Heart right ventricle (tissue), 16 donors: ENCODE measurements at regions of chr1 and their contacts with region 1.

Region 1: DNA sequence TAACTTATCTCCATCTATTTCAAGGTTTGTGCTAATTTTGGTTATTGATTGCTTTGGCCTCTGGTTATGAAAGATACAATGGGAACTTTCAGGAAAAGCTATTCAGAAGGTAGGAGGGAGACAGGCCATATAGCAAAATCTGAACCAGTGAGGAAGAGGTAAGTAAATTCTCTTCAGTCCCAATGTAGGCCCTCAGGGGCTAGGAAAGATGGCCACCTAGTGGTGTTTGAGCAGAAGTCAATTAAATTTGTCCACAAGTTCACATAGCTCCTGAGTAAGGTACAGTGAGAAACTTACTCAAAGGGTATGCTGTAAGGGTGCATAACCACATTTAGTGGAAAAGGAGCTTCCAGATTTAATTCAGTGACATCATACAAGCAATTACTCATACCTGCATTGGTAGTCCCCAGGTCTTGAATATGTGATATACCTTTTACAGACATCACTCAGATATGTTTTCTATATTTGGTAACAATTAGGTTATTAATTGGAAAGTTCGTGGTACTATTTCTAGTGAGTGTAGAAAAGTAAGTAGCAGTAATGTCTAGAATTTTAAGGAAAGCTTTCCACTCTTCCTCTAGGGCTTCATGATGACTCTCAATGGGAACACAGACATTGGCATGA is 21.4 kb upstream of the FMO1 start:
- DNase-seq: peak in 1 of 2 donors; percentile 46
- ATAC-seq: peak in 7 of 8 donors; percentile 68 to 87 (median 79)
- H3K4me3 ChIP-seq: no peak overlapping the region
- H3K27ac ChIP-seq: no peak overlapping the region
- H3K4me1 ChIP-seq: peaks cover 0 to 28% (median 11%) of the 10 kb centered on the region in 9 donors
- H3K27me3 ChIP-seq: no peaks in the 10 kb centered on the region
- CTCF ChIP-seq: peak; percentile 66 to 89 (median 84)

Region 2: GRCh38 chr1:170967042-170967910 is 259.6 kb before region 1 on chr1:
- intact Hi-C with region 1: loop called (anchors 1 to 10 kb)
- DNase-seq: peak in 1 of 2 donors; percentile 11
- ATAC-seq: peak in 2 of 8 donors; percentile 50 to 64
- H3K4me3 ChIP-seq: no peak overlapping the region
- H3K27ac ChIP-seq: no peak overlapping the region
- H3K4me1 ChIP-seq: peaks cover 0 to 4% (median 0%) of the 10 kb centered on the region in 9 donors
- H3K27me3 ChIP-seq: no peaks in the 10 kb centered on the region
- CTCF ChIP-seq: peak; percentile 49 to 79 (median 69)

Region 3: DNA sequence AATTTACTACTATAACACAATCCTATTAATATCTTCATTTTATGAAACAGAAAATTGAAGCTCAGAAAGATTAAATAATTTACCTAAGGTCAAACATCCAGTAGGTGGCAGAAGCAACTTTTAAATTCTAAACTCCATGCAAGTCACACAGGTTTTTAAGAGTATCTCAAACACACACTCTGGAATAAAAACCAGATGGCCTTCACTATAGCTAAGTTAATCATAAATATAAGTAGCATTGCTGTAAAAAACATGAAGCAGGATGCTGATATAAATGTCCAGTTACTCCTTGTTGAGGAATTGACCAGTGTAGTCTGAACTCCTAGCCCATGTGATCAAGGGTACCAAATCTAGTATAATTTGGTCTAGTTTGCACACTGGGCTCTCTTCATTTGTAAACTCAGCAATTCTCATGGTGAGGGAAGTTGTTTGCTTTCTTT is 145.5 kb before region 1 on chr1:
- intact Hi-C with region 1: loop called in 9 of 10 experiments (anchors 1 to 5 kb)
- DNase-seq: no peak
- ATAC-seq: peak in 7 of 8 donors; percentile 38 to 65 (median 56)
- H3K4me3 ChIP-seq: no peak overlapping the region
- H3K27ac ChIP-seq: peak overlapping the region in 8 of 10 donors; percentile 9 to 71 (median 48)
- H3K4me1 ChIP-seq: peaks cover 0 to 42% (median 10%) of the 10 kb centered on the region in 9 donors
- H3K27me3 ChIP-seq: no peaks in the 10 kb centered on the region
- CTCF ChIP-seq: peak; percentile 27 to 74 (median 59)

Region 4: GRCh38 chr1:171107262-171107940 is 119.5 kb before region 1 on chr1:
- intact Hi-C with region 1: loop called in 1 of 10 experiments (anchors 2 kb)
- DNase-seq: no peak
- ATAC-seq: peak in 4 of 8 donors; percentile 53 to 68 (median 62)
- H3K4me3 ChIP-seq: no peak overlapping the region
- H3K27ac ChIP-seq: peak overlapping the region in 4 of 10 donors; percentile 18 to 45 (median 32)
- H3K4me1 ChIP-seq: peaks cover 0 to 48% (median 5%) of the 10 kb centered on the region in 9 donors
- H3K27me3 ChIP-seq: no peaks in the 10 kb centered on the region
- CTCF ChIP-seq: peak in 5 of 9 donors; percentile 40 to 55 (median 44)

Region 5: DNA sequence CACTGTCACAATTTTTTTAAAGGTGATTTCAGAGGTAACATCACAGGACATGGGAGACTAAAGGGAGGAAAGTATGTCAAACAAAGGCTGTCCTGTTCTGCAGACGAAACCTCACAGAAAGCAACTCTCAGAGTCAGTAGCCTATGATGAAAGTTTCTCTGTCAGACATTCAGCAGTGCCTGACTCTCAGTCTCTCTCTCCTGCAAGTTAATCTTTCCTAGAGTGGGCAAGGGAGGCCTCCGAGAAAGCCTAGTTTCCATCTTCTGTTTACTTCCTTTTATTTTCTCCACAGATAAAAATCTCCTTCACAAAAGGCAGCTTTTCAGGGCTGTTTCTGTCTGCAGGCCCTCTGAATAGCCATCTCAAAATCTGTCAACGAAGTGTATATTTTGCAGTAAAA is 66.6 kb before region 1 on chr1:
- intact Hi-C with region 1: no loop called
- DNase-seq: no peak
- ATAC-seq: no peak
- H3K4me3 ChIP-seq: no peak overlapping the region
- H3K27ac ChIP-seq: peak overlapping the region in 5 of 10 donors; percentile 17 to 60 (median 45)
- H3K4me1 ChIP-seq: peaks cover 0 to 17% (median 12%) of the 10 kb centered on the region in 9 donors
- H3K27me3 ChIP-seq: no peaks in the 10 kb centered on the region
- CTCF ChIP-seq: no peak

Region 6: DNA sequence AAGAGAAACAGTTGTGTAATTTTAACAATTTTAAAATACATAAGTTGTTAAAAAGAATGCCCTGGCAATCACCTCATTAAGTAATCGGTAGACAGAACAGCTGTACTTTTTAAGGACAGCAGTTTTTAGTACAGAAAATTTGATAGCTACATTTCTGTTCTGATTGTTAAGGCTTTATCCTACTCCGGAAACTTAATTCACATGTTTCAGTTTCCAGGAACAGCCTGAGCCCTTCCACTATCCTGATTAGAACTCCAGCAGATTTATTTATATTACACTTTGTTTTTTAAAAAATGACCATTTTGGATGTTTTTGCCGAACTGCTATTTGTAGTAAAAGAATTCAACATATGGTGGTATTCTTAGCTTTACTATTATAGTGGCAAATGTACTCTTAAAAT is 267.2 kb after region 1 on chr1:
- intact Hi-C with region 1: no loop called
- DNase-seq: no peak
- ATAC-seq: peak in 2 of 8 donors; percentile 33 to 62
- H3K4me3 ChIP-seq: no peak overlapping the region
- H3K27ac ChIP-seq: peak overlapping the region in 2 of 10 donors; percentile 11 to 42
- H3K4me1 ChIP-seq: peaks cover 8 to 93% (median 78%) of the 10 kb centered on the region in 9 donors
- H3K27me3 ChIP-seq: no peaks in the 10 kb centered on the region
- CTCF ChIP-seq: no peak

Region 7: DNA sequence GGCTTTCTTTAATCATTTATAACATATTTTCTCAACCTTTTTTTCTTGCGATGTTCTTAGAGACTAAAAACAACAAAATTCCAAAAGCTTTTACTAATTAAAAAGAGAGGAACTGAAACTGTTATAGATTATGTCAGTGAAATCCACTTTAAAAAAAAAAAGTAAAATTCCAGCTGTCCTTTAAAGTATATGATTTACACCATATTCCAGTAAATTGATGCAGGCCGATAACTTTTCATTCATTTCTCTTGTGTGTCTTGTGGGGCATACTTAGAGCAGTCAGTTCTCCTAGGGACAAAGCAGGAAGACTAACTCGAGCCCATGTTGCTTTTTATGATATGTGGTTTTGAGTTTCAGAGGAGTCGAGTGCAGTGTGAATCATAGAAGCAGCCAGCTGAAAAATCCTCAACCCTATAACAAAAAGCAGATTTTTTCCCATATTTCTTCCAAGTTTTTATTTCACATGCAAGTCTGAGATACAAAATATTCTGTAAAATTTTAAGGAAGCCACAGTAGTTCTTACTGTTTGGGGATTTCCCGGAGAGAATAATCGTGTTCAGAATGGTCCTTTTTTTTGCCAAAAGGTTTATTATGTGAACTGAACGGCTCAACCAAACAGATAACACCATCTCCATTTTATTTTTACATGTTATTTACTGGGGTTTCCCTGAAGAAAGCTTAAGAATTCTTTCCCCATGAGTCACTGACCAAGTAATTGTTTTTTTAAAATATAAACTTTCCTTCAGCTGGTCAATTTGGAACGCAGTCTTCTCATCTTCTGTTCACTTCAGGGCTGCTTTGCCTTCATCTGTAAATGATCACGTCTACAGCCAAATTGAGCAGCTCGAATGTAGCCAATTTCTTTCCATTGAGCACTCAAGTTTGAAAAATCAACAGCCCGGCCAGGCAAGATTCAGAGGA is 1116.6 kb after region 1 on chr1:
- intact Hi-C with region 1: no loop called
- DNase-seq: no peak
- ATAC-seq: peak in 7 of 8 donors; percentile 31 to 80 (median 70)
- H3K4me3 ChIP-seq: peak overlapping the region in 1 of 10 donors; percentile 11
- H3K27ac ChIP-seq: peak overlapping the region in 8 of 10 donors; percentile 19 to 76 (median 60)
- H3K4me1 ChIP-seq: peaks cover 0 to 50% (median 12%) of the 10 kb centered on the region in 9 donors
- H3K27me3 ChIP-seq: no peaks in the 10 kb centered on the region
- CTCF ChIP-seq: no peak